ENCODE measurements at regions of chr3 and their contacts with region 1.

Region 1: DNA sequence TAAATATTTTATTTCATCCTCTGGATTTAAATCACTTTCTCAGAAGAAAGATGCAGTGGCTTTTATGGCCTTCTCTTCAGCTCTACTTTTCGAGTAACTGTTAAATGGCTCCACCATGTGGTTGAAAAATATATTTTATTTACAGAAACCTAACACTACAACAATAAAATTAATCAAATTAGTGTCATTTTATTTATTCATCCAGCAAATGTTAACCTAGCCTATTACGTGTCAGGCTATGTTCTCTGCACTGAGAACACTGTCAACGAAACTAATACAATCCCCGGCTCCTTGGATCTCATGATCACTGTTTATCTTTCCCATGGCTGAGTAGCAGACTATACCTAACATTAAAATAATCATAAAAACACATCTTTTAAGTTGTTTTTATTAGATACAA is 148.0 kb upstream of the OSTN start:
- DNase-seq: peak; percentile 31
- ATAC-seq: peak; percentile 63
- H3K4me3 ChIP-seq: no peak overlapping the region
- H3K27ac ChIP-seq: no peak overlapping the region
- H3K4me1 ChIP-seq: no peaks in the 10 kb centered on the region
- H3K27me3 ChIP-seq: no peaks in the 10 kb centered on the region
- CTCF ChIP-seq: peak; percentile 7 to 73 (median 55); a peak in 3 of 6 replicates
- POLR2A ChIP-seq: no peak
- RAD21 ChIP-seq: peak; percentile 82

Region 2: DNA sequence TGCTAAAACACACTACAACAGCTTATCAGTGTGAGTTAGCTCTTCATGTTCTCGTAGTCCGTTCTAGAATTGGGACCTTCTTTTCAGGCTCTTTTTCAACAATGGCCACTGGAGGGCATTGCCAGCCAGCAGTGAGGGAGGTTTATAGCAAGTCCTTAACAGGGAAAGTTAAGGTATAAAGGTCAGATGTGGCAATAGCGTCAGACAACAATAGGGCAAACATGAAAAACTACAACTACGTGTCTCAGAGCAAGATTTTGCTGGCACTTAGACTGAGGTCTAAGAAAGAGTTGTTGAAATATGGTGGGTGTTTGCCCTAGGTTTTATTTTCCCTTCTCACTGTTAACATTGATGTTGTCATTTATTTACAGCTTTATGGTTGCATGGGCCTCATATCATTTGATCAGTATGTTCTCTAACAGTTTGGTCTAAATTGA is 349.9 kb before region 1 on chr3:
- CTCF ChIA-PET with region 1: interaction called, 8 read pairs
- POLR2A ChIA-PET with region 1: no interaction called
- RAD21 ChIA-PET with region 1: interaction called, 3 to 7 read pairs
- intact Hi-C with region 1: loop called (anchors 1 kb)
- DNase-seq: peak; percentile 51
- ATAC-seq: peak; percentile 94
- H3K4me3 ChIP-seq: no peak overlapping the region
- H3K27ac ChIP-seq: no peak overlapping the region
- H3K4me1 ChIP-seq: peaks cover 0 to 3% of the 10 kb centered on the region in 2 experiments; a peak in 1 of 4 replicates
- H3K27me3 ChIP-seq: no peaks in the 10 kb centered on the region
- CTCF ChIP-seq: peak; percentile 62 to 77 (median 68); a peak in 5 of 6 replicates
- POLR2A ChIP-seq: no peak
- RAD21 ChIP-seq: peak; percentile 85

Region 3: GRCh38 chr3:190718671-190719070 is 332.4 kb before region 1 on chr3:
- CTCF ChIA-PET with region 1: no interaction called
- POLR2A ChIA-PET with region 1: no interaction called
- RAD21 ChIA-PET with region 1: no interaction called
- intact Hi-C with region 1: loop called (anchors 5 kb)
- DNase-seq: no peak
- ATAC-seq: no peak
- H3K4me3 ChIP-seq: no peak overlapping the region
- H3K27ac ChIP-seq: no peak overlapping the region
- H3K4me1 ChIP-seq: no peaks in the 10 kb centered on the region
- H3K27me3 ChIP-seq: no peaks in the 10 kb centered on the region
- CTCF ChIP-seq: no peak
- POLR2A ChIP-seq: no peak
- RAD21 ChIP-seq: no peak

Region 4: GRCh38 chr3:190811775-190812480 is 239.1 kb before region 1 on chr3:
- CTCF ChIA-PET with region 1: interaction called, 18 read pairs
- POLR2A ChIA-PET with region 1: no interaction called
- RAD21 ChIA-PET with region 1: interaction called in 1 of 2 experiments, 3 read pairs
- intact Hi-C with region 1: loop called (anchors 1 kb)
- DNase-seq: peak; percentile 67
- ATAC-seq: peak; percentile 95
- H3K4me3 ChIP-seq: no peak overlapping the region
- H3K27ac ChIP-seq: no peak overlapping the region
- H3K4me1 ChIP-seq: no peaks in the 10 kb centered on the region
- H3K27me3 ChIP-seq: no peaks in the 10 kb centered on the region
- CTCF ChIP-seq: peak; percentile 64 to 84 (median 74)
- POLR2A ChIP-seq: no peak
- RAD21 ChIP-seq: peak; percentile 79

Region 5: GRCh38 chr3:190883973-190884832 is 166.8 kb before region 1 on chr3:
- CTCF ChIA-PET with region 1: interaction called, 17 read pairs
- POLR2A ChIA-PET with region 1: no interaction called
- RAD21 ChIA-PET with region 1: interaction called, 3 to 5 read pairs
- intact Hi-C with region 1: loop called (anchors 2 kb)
- DNase-seq: peak; percentile 54
- ATAC-seq: peak; percentile 85
- H3K4me3 ChIP-seq: no peak overlapping the region
- H3K27ac ChIP-seq: no peak overlapping the region
- H3K4me1 ChIP-seq: no peaks in the 10 kb centered on the region
- H3K27me3 ChIP-seq: no peaks in the 10 kb centered on the region
- CTCF ChIP-seq: peak; percentile 58 to 95 (median 89)
- POLR2A ChIP-seq: no peak
- RAD21 ChIP-seq: peak; percentile 68

Region 6: DNA sequence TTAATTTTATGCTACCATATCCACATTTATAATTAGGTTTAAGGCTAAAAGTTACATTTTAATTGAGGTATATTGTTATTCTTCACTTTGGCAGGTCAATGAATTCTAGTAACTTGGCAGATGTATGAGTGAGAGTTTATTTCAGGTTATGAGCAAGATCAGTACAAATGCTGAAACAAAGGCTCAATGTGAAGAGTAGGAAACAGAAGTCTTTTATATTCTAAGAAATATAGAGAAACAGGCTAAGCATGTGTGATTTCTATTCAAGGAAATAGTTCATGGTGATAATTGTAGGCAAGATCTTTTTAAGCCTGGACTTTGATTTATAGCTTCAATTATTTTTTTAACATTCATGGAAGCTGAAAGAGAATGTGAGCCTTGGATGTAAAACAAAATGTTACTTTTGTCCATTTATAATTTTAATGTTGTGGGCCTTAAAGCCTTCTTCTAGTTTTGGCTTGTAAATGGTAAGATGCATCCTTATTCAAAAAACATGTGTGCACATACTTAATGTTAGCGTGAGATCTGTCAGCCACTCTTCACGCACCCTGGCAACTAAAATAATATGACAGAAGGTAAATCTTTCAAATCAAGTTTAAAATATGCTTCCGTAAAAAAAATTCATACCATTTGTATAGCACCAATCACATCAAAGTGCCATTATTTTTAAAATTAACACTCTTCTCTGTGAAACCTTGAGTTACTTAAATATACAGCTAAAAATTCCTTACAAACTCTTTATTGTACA is 125.2 kb after region 1 on chr3:
- CTCF ChIA-PET with region 1: no interaction called
- POLR2A ChIA-PET with region 1: no interaction called
- RAD21 ChIA-PET with region 1: no interaction called
- intact Hi-C with region 1: no loop called
- DNase-seq: no peak
- ATAC-seq: no peak
- H3K4me3 ChIP-seq: no peak overlapping the region
- H3K27ac ChIP-seq: no peak overlapping the region
- H3K4me1 ChIP-seq: no peaks in the 10 kb centered on the region
- H3K27me3 ChIP-seq: no peaks in the 10 kb centered on the region
- CTCF ChIP-seq: no peak
- POLR2A ChIP-seq: no peak
- RAD21 ChIP-seq: no peak